Activated naive CD4-positive, alpha-beta T cell treated with anti-CD3 and anti-CD28 coated beads for 36 hours (primary cell): ENCODE measurements at regions of chrX and their contacts with region 1.

Region 1: GRCh38 chrX:39242187-39242586 is 440.9 kb downstream of the MID1IP1 start:
- DNase-seq: peak; percentile 17
- H3K4me3 Mint-ChIP-seq: no peak overlapping the region
- H3K27ac Mint-ChIP-seq: no peak overlapping the region
- H3K4me1 Mint-ChIP-seq: peaks cover 24% of the 10 kb centered on the region
- H3K27me3 Mint-ChIP-seq: no peaks in the 10 kb centered on the region

Region 2: DNA sequence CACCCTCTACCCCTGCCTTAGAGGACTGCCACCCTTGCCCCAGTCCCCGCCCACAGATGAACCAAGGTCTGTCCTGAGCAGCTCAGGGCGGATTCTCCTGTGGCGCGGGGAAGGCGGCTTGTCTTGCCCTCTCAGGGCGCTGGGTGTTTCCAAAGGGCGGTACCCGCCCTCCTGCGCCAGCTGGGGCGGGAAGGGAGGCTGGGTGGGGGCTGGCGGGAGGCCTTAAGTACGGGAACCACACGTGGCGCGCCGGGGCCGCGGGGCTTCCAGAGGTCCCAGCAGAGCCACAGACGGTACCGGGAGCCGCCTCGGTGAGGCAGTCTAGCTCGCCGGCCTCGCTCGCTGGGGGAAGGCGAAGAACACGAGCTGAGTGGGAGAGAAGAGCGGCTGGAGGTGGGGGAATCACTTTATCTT is 79.9 kb before region 1 on chrX:
- CTCF ChIA-PET with region 1: interaction called, 3 read pairs
- intact Hi-C with region 1: loop called (anchors 1 kb)
- DNase-seq: peak; percentile 66
- H3K4me3 Mint-ChIP-seq: peak overlapping the region; percentile 41
- H3K27ac Mint-ChIP-seq: no peak overlapping the region
- H3K4me1 Mint-ChIP-seq: peaks cover 28% of the 10 kb centered on the region
- H3K27me3 Mint-ChIP-seq: peaks cover 2% of the 10 kb centered on the region

Region 3: GRCh38 chrX:39174772-39175417 is 67.3 kb before region 1 on chrX:
- CTCF ChIA-PET with region 1: no interaction called
- intact Hi-C with region 1: loop called (anchors 1 kb)
- DNase-seq: peak; percentile 68
- H3K4me3 Mint-ChIP-seq: peak overlapping the region; percentile 43
- H3K27ac Mint-ChIP-seq: peak overlapping the region; percentile 78
- H3K4me1 Mint-ChIP-seq: peaks cover 31% of the 10 kb centered on the region
- H3K27me3 Mint-ChIP-seq: no peaks in the 10 kb centered on the region

Region 4: DNA sequence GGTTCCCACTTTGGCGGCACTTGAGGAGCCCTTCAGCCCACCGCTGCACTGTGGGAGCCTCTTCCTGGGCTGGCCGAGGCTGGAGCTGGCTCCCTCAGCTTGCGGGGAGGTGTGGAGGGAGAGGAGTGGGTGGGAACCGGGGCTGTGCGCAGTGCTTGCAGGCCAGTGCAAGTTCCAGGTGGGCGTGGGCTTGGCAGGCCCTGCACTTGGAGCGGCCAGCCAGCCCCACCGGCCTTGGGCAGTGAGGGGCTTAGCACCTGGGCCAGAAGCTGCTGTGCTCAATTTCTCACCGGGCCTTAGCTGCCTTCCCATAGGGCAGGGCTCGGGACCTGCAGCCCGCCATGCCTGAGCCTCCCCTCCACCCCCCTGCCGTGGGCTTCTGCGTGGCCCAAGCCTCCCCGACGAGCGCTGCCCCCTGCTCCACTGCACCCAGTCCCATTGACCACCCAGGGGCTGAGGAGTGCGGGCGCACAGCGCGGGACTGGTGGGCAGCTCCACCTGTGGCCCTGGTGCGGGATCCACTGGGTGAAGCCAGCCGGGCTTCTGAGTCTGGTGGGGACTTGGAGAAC is 33.4 kb after region 1 on chrX:
- CTCF ChIA-PET with region 1: no interaction called
- intact Hi-C with region 1: no loop called
- DNase-seq: no peak
- H3K4me3 Mint-ChIP-seq: no peak overlapping the region
- H3K27ac Mint-ChIP-seq: no peak overlapping the region
- H3K4me1 Mint-ChIP-seq: no peaks in the 10 kb centered on the region
- H3K27me3 Mint-ChIP-seq: no peaks in the 10 kb centered on the region